Dendritic cell treated with granulocyte-macrophage colony-stimulating factor and Interleukin-4, amounts not matched to agents 40 ng/mL and 50 ng/mL, for 4 days (primary cell): ENCODE measurements at regions of chr7 and their contacts with region 1.

Region 1: DNA sequence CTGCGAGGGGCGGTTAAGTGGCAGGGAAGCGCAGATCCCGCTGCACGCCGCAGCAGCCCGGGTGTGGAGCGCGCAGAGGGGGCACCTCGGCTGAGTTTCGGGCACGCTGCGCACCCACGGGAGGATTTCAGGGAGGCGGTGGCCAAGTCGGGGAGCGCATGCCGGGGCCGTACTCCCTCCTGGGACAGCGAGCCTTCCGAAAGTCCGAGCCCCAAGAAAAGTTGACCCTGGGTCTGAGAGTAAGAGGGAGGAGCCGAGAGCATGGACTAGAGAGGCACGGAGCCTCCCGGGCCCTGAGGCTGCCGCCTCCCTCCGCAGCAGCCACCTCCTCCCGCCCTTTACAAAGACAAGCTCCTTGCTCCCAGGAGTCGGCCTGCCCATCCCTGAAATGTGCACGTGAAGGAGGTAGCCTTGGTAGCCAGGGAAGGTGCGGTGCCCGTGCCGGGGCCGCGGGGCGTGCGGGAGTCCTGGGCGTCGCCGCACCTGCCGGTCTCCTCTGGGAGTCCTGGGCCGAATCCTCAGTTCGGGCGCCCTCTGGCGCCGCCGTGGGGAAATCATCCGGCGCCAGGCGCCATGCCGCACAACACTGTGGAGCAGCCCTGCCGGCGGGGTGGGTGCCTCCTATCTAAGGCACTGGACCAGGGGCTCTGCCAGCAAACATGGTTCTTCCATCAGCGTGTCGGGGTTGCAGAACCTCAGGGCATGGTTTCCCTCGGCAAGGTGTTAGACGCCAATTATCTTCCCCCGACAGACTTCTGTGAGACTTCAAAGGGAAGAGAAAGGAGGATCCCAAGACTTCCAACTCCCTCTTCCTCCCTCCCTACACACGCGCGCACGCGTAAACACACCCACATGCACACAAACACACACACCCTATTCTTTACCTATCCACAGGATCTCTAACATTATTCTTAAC is 104.0 kb downstream of the TRIL start:
- H3K4me3 Mint-ChIP-seq: peak overlapping the region; percentile 78
- H3K27ac Mint-ChIP-seq: peak overlapping the region; percentile 67
- H3K4me1 Mint-ChIP-seq: peaks cover 20% of the 10 kb centered on the region
- H3K27me3 Mint-ChIP-seq: peaks cover 77% of the 10 kb centered on the region

Region 2: DNA sequence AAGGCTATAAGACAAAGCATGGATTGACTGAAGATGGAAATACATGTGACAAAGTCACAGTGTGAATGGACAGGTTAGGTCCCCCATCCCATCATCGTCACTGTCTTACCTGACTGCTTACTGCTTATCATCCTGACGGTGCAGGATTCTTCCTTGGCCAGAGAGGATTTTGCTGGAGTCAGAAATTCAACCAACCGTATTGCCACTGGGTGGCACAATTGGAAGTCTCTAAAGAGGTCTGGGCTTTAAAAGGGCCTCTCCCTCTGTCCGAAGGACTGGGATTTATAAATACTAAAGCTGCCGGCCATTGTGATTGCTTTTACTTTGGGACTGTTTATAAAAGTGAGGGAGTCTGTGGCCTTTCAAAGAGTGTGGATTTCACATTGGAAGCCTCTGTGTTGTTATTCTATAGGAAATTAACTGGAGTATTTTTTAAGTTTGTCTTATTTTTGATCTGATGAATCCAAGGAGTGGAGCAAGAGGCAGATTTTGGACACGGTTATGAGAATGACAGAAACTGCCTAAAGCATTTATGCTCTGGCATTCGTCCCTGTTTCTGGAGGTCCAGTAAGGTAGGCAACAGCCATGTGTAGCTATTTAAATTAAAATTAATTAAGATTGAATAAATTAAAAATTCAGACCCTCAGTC is 555.1 kb before region 1 on chr7:
- intact Hi-C with region 1: loop called (anchors 10 kb)
- H3K4me3 Mint-ChIP-seq: no peak overlapping the region
- H3K27ac Mint-ChIP-seq: no peak overlapping the region
- H3K4me1 Mint-ChIP-seq: peaks cover 6% of the 10 kb centered on the region
- H3K27me3 Mint-ChIP-seq: peaks cover 18% of the 10 kb centered on the region

Region 3: GRCh38 chr7:28389504-28390395 is 464.3 kb before region 1 on chr7:
- intact Hi-C with region 1: loop called (anchors 1 kb)
- H3K4me3 Mint-ChIP-seq: peak overlapping the region; percentile 33
- H3K27ac Mint-ChIP-seq: peak overlapping the region; percentile 42
- H3K4me1 Mint-ChIP-seq: peaks cover 5% of the 10 kb centered on the region
- H3K27me3 Mint-ChIP-seq: peaks cover 38% of the 10 kb centered on the region

Region 4: DNA sequence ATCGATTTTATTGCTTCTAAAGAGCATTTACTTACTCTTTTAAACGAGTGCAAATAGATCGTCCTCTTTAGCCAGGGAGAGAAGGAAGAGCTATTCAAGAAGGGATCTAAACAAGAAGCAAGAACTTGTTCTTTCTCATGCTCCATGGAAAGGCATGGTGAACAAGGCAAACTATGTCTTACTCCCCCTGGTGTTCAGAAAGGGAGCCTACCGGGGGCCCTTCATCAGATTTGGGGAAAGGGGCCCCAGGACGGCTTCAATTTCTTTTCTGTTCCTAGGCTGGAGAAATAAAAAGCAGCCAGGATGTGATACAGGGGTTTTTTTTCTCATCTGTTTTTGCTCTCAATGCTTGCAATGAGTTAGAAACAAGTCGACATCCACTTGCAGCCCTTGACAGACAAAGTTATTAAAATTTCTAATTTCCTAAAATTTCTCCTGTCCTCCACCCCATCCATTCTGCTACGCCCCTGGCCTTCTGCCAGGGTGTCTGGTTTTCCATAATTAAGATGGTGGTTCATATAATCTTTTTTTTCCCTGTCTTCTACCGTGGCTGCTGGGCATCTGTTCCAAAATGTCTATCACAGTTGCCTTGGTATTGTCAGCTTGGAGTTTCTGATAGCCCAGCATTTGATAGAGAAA is 227.3 kb before region 1 on chr7:
- intact Hi-C with region 1: loop called (anchors 10 kb)
- H3K4me3 Mint-ChIP-seq: no peak overlapping the region
- H3K27ac Mint-ChIP-seq: no peak overlapping the region
- H3K4me1 Mint-ChIP-seq: peaks cover 18% of the 10 kb centered on the region
- H3K27me3 Mint-ChIP-seq: peaks cover 25% of the 10 kb centered on the region

Region 5: DNA sequence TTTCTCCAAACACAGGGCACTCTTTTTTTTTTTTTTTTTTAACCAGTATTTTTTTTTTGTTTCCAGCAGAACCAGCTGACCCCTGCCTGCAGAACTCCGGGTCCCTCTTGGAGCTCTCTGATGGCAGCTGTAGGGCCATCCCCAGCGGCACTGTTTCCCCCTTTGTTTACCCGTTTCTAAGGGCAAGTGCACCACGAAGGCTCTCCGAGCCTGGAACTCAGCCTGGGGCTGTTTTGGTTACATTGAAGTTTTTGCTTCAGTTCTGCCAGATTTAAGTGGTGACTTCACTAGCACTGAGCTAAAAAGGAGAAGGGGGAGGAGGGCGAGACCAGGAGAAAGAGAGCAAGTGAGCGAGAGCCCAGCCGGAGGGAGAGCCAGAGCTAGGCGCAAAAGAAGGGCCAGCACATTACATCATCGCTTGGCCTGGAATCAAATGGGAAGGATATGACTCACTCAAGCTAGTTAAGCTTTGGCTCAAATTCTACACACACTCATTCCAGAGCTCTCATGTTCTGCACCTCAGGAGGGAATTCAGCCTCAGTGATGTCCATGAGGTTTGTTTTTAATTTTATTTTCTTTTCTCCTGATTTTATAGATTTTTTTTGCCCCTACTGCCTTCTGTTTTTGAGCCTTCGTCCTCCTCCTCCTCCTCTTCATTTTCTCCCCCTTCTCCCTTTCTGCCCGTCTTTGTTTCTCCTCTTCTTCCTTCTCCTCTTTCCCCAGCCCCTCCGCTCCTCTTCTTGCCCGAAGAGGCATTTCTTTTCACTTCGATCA is 168.3 kb before region 1 on chr7:
- intact Hi-C with region 1: loop called (anchors 10 kb)
- H3K4me3 Mint-ChIP-seq: no peak overlapping the region
- H3K27ac Mint-ChIP-seq: no peak overlapping the region
- H3K4me1 Mint-ChIP-seq: peaks cover 39% of the 10 kb centered on the region
- H3K27me3 Mint-ChIP-seq: no peaks in the 10 kb centered on the region

Region 6: DNA sequence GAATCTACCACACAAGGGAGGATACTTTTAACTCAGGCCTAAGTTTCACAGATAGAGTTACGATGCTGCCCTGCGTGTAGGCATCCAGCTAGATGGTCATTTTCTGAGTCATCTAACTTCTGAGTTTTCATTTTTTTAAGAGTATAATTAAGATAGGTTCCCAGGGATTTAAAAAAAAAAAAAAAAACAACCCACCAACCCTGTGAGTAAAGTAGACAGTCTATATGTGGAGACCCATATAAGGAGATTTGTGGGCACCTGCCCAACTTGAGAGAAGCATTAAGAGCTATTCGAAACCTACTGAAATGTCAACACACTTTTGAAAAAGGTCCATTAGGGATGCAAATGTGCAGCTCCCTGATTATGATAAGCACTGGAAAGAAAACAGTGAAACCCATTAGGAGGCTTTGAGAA is 153.3 kb before region 1 on chr7:
- intact Hi-C with region 1: no loop called
- H3K4me3 Mint-ChIP-seq: no peak overlapping the region
- H3K27ac Mint-ChIP-seq: no peak overlapping the region
- H3K4me1 Mint-ChIP-seq: peaks cover 29% of the 10 kb centered on the region
- H3K27me3 Mint-ChIP-seq: no peaks in the 10 kb centered on the region

Region 7: DNA sequence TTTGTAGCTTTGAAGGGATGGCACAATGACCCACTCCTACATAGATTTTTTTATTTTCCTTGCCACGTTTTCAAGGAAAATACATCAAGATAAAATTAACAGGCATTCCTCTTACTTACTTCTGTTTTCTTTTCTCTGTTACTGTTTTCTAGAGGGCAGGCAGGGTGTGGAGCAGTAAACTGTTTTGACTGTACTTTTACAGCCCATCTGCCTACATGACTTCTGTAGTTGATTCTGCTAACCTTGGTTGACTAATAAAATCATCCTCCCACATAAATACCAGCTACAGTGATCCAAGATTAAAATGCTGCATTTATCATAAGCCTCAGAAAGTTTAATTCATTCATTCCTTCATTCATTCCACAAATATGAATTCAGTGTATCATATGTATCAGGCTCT is 54.5 kb before region 1 on chr7:
- intact Hi-C with region 1: loop called (anchors 5 kb)
- H3K4me3 Mint-ChIP-seq: no peak overlapping the region
- H3K27ac Mint-ChIP-seq: peak overlapping the region; percentile 92
- H3K4me1 Mint-ChIP-seq: peaks cover 26% of the 10 kb centered on the region
- H3K27me3 Mint-ChIP-seq: no peaks in the 10 kb centered on the region

Region 8: GRCh38 chr7:29022301-29022988 is 168.4 kb after region 1 on chr7:
- intact Hi-C with region 1: no loop called
- H3K4me3 Mint-ChIP-seq: no peak overlapping the region
- H3K27ac Mint-ChIP-seq: no peak overlapping the region
- H3K4me1 Mint-ChIP-seq: peaks cover 19% of the 10 kb centered on the region
- H3K27me3 Mint-ChIP-seq: no peaks in the 10 kb centered on the region